ENCODE measurements at regions of chr16 and their contacts with region 1.

Region 1: GRCh38 chr16:48623304-48624016 is 13.5 kb upstream of the N4BP1 start:
- DNase-seq: peak; percentile 46 to 89
- H3K4me3 ChIP-seq: peak overlapping the region; percentile 46 to 59
- H3K27ac ChIP-seq: peak overlapping the region; percentile 48 to 60
- H3K4me1 ChIP-seq: peaks cover 0 to 8% of the 10 kb centered on the region in 2 donors
- H3K27me3 ChIP-seq: no peaks in the 10 kb centered on the region
- CTCF ChIP-seq: peak; percentile 92 to 100 (median 99)

Region 2: GRCh38 chr16:46973207-46973995 is 1650.1 kb before region 1 on chr16 and contains the start of gene DNAJA2:
- intact Hi-C with region 1: loop called (anchors 10 kb)
- DNase-seq: peak; percentile 47 to 94
- H3K4me3 ChIP-seq: peak within 1 kb of the TSS; percentile 87
- H3K27ac ChIP-seq: peak within 1 kb of the TSS; percentile 93 to 96
- H3K4me1 ChIP-seq: peaks cover 10 to 15% of the 10 kb centered on the region in 2 donors
- H3K27me3 ChIP-seq: no peaks in the 10 kb centered on the region
- CTCF ChIP-seq: no peak
- total RNA-seq, gene DNAJA2: 15.8 TPM

Region 3: GRCh38 chr16:48271728-48272127 is 351.7 kb before region 1 on chr16:
- intact Hi-C with region 1: loop called (anchors 5 kb)
- DNase-seq: no peak
- H3K4me3 ChIP-seq: no peak overlapping the region
- H3K27ac ChIP-seq: peak overlapping the region; percentile 12 to 70
- H3K4me1 ChIP-seq: peaks cover 0 to 11% of the 10 kb centered on the region in 2 donors
- H3K27me3 ChIP-seq: no peaks in the 10 kb centered on the region
- CTCF ChIP-seq: peak in 1 of 3 experiments; percentile 24

Region 4: DNA sequence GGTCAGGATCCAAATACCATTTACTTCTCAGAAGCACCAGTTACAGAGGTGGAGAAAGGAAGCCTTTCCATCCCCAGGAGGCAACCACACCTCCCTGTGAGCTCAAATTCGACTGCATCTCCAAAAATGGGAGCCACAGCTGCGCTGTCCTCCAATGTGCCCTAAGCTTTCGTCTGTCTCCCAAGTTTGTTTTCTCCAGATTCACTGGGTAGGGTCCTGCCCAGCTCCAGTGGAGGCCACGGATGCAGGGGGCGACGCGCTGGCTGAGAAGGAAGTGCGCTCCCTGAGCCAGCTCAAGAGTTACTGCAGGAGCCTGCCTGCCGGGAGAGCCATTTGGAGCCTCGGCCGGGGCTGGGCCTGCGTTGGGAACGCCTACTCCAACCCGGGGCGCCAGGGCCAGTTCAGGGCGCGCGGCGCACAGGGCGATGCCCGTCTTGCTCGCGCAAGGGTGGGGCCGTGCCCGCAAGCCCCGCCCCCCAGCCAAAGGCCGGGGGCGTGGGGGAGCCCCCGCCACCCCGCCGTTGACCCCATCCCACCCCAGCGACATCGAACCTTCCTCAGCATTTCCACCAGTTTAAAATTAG is 257.8 kb before region 1 on chr16:
- intact Hi-C with region 1: loop called (anchors 5 kb)
- DNase-seq: peak; percentile 64 to 93
- H3K4me3 ChIP-seq: peak overlapping the region; percentile 58 to 75
- H3K27ac ChIP-seq: peak overlapping the region; percentile 87 to 90
- H3K4me1 ChIP-seq: peaks cover 5 to 13% of the 10 kb centered on the region in 2 donors
- H3K27me3 ChIP-seq: no peaks in the 10 kb centered on the region
- CTCF ChIP-seq: peak in 1 of 3 experiments; percentile 16

Region 5: GRCh38 chr16:48535831-48536613 is 87.4 kb before region 1 on chr16:
- intact Hi-C with region 1: loop called (anchors 5 kb)
- DNase-seq: peak in 1 of 2 donors; percentile 79
- H3K4me3 ChIP-seq: no peak overlapping the region
- H3K27ac ChIP-seq: peak overlapping the region; percentile 78 to 86
- H3K4me1 ChIP-seq: peaks cover 18 to 31% of the 10 kb centered on the region in 2 donors
- H3K27me3 ChIP-seq: no peaks in the 10 kb centered on the region
- CTCF ChIP-seq: no peak